ENCODE measurements at regions of chrX and their contacts with region 1.

Region 1: DNA sequence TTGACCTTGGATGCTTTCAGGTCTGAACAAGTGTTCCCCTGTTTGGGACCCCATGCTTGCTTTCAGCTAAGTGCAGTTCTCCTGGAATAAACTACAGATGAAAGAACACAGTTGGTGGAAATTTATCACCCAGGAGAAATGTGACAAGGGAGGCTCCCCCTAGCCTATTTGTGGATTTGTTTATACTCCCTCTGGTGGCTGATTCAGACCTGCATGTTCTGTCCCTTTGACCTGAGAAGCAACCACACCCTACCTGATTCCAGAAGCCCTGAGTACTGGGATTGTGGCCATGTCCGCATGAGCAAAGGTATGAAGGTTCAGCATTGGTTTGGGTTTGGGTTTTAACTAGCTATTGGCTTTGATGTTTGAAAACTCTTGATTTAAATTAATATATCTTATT is 440.9 kb downstream of the MID1IP1 start:
- DNase-seq: peak in 4 of 5 donors; percentile 14 to 27 (median 20)
- H3K4me3 ChIP-seq: no peak overlapping the region
- H3K4me3 Mint-ChIP-seq: no peak overlapping the region
- H3K27ac ChIP-seq: no peak overlapping the region
- H3K27ac Mint-ChIP-seq: no peak overlapping the region
- H3K4me1 ChIP-seq: no peaks in the 10 kb centered on the region
- H3K4me1 Mint-ChIP-seq: no peaks in the 10 kb centered on the region
- H3K27me3 ChIP-seq: no peaks in the 10 kb centered on the region
- H3K27me3 Mint-ChIP-seq: no peaks in the 10 kb centered on the region

Region 2: DNA sequence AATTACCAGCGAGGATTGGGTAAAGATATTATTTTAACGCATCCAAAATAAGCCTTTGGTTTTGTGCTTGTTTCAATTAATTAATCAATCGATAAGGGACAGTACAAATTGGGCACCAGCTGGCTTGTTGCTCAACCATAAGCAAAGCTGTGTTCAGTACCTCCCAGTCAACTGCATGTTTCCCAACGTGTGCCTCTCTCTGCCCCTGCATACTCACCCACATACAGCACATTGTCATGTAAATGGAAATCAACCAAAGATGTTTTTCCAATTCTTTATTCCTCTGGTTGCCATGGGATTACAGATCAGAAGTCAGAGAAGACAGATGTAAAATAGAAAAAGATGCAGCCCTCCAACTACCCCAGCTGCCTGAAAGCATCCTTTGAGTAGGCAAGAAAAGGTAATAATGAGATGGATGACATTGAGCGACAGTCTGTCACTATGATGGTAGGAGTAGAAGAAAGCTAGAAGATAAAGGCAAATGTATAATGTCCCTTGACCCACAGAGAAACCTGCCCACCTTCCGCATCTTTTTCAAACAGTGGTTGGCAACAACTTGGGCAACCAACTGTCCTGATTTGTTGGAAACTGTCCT is 773.5 kb before region 1 on chrX:
- CTCF ChIA-PET with region 1: no interaction called
- POLR2A ChIA-PET with region 1: no interaction called
- intact Hi-C with region 1: no loop called
- DNase-seq: no peak
- H3K4me3 ChIP-seq: no peak overlapping the region
- H3K4me3 Mint-ChIP-seq: no peak overlapping the region
- H3K27ac ChIP-seq: no peak overlapping the region
- H3K27ac Mint-ChIP-seq: no peak overlapping the region
- H3K4me1 ChIP-seq: no peaks in the 10 kb centered on the region
- H3K4me1 Mint-ChIP-seq: no peaks in the 10 kb centered on the region
- H3K27me3 ChIP-seq: no peaks in the 10 kb centered on the region
- H3K27me3 Mint-ChIP-seq: no peaks in the 10 kb centered on the region

Region 3: DNA sequence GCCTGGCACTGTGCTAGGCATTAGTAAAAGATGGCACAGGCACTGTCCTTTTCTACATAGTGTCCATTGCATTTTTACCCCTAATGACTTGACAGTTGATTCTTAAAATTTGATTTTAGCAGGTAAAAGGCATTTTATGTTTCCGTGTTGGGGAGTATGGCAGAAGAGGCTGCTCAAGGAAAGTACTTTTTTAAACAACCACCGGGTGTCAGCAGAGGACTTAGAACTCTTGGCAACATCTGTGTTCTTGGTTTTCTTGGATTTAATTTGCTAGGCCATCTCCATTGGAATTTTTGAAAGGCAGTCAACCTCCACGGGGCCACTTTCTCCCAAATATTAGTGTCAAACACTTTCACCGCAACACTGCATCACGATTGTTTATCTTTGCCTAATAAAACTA is 577.9 kb before region 1 on chrX:
- CTCF ChIA-PET with region 1: no interaction called
- POLR2A ChIA-PET with region 1: no interaction called
- intact Hi-C with region 1: loop called (anchors 5 kb)
- DNase-seq: no peak
- H3K4me3 ChIP-seq: no peak overlapping the region
- H3K4me3 Mint-ChIP-seq: no peak overlapping the region
- H3K27ac ChIP-seq: no peak overlapping the region
- H3K27ac Mint-ChIP-seq: no peak overlapping the region
- H3K4me1 ChIP-seq: peaks cover 2% of the 10 kb centered on the region
- H3K4me1 Mint-ChIP-seq: peaks cover 0 to under 1% (median under 1%) of the 10 kb centered on the region in 4 donors
- H3K27me3 ChIP-seq: no peaks in the 10 kb centered on the region
- H3K27me3 Mint-ChIP-seq: no peaks in the 10 kb centered on the region

Region 4: DNA sequence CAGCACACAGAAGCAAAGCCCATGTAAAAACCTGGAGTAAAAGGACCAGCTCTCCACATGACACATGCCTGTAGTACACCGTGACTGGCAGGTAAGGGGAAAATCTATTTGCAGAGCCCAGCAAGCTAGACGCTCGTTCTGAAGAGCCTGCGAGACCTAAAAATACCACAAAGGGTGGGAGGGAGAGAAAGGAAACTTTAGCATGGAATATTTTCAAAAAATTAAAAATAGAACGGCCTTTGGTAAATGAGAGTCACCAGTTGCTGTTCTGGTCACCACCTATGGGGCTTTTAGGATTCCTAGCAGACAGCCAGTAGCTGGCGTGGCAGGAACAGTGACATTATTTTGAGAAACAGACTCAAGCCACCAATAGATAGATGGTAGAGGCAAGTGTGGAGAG is 325.4 kb before region 1 on chrX:
- CTCF ChIA-PET with region 1: no interaction called
- POLR2A ChIA-PET with region 1: no interaction called
- intact Hi-C with region 1: no loop called
- DNase-seq: no peak
- H3K4me3 ChIP-seq: no peak overlapping the region
- H3K4me3 Mint-ChIP-seq: no peak overlapping the region
- H3K27ac ChIP-seq: no peak overlapping the region
- H3K27ac Mint-ChIP-seq: no peak overlapping the region
- H3K4me1 ChIP-seq: no peaks in the 10 kb centered on the region
- H3K4me1 Mint-ChIP-seq: no peaks in the 10 kb centered on the region
- H3K27me3 ChIP-seq: no peaks in the 10 kb centered on the region
- H3K27me3 Mint-ChIP-seq: no peaks in the 10 kb centered on the region

Region 5: GRCh38 chrX:39162322-39162735 is 79.9 kb before region 1 on chrX:
- CTCF ChIA-PET with region 1: interaction called, 15 read pairs
- POLR2A ChIA-PET with region 1: no interaction called
- intact Hi-C with region 1: loop called (anchors 2 kb)
- DNase-seq: peak; percentile 13 to 42 (median 29)
- H3K4me3 ChIP-seq: no peak overlapping the region
- H3K4me3 Mint-ChIP-seq: peak overlapping the region in 5 of 8 donors; percentile 41 to 73 (median 62)
- H3K27ac ChIP-seq: no peak overlapping the region
- H3K27ac Mint-ChIP-seq: peak overlapping the region in 1 of 7 donors; percentile 63
- H3K4me1 ChIP-seq: peaks cover under 1% of the 10 kb centered on the region
- H3K4me1 Mint-ChIP-seq: peaks cover 4 to 10% (median 6%) of the 10 kb centered on the region in 4 donors
- H3K27me3 ChIP-seq: no peaks in the 10 kb centered on the region
- H3K27me3 Mint-ChIP-seq: peaks cover 2 to 4% of the 10 kb centered on the region in 2 donors

Measured in CD4-positive, alpha-beta memory T cell (primary cell).